Gastrocnemius medialis (tissue), 4 donors: ENCODE measurements at regions of chr13 and their contacts with region 1.

Region 1: GRCh38 chr13:41578371-41578770 is 121.0 kb downstream of the RGCC start:
- DNase-seq: no peak
- ATAC-seq: no peak
- H3K4me3 ChIP-seq: no peak overlapping the region
- H3K27ac ChIP-seq: peak overlapping the region; percentile 59 to 62 (median 60)
- H3K4me1 ChIP-seq: peaks cover 0 to 6% of the 10 kb centered on the region in 2 donors
- H3K27me3 ChIP-seq: no peaks in the 10 kb centered on the region
- CTCF ChIP-seq: no peak
- POLR2A ChIP-seq: no peak

Region 2: GRCh38 chr13:41520016-41520659 is 58.2 kb before region 1 on chr13:
- in situ Hi-C with region 1: no loop called
- intact Hi-C with region 1: no loop called
- DNase-seq: no peak
- ATAC-seq: no peak
- H3K4me3 ChIP-seq: no peak overlapping the region
- H3K27ac ChIP-seq: no peak overlapping the region
- H3K4me1 ChIP-seq: no peaks in the 10 kb centered on the region
- H3K27me3 ChIP-seq: no peaks in the 10 kb centered on the region
- CTCF ChIP-seq: no peak
- POLR2A ChIP-seq: no peak

Region 3: GRCh38 chr13:41533266-41534052 is 44.9 kb before region 1 on chr13:
- in situ Hi-C with region 1: no loop called
- intact Hi-C with region 1: loop called (anchors 1 kb)
- DNase-seq: peak in 1 of 2 donors; percentile 64
- ATAC-seq: peak; percentile 33 to 73
- H3K4me3 ChIP-seq: no peak overlapping the region
- H3K27ac ChIP-seq: no peak overlapping the region
- H3K4me1 ChIP-seq: no peaks in the 10 kb centered on the region
- H3K27me3 ChIP-seq: no peaks in the 10 kb centered on the region
- CTCF ChIP-seq: no peak
- POLR2A ChIP-seq: no peak

Region 4: DNA sequence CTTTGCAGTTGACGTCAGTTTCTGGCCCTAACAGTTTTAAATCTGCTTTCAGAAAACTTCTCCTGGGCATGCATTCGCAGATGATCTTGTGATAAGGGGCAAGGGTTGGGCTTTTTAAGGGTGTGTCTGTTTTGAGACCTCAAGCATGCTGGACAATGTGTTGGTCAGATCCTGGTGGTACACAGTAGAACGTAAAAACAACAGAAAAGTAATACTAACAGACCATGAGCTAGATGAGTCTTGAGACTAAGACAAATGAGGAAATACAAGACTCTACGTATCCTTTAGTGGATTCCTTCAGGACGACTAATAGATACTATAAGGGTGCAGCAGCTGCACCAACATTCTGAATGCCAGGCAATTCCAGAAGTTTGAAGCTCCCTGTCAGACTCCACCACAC is 1682.6 kb after region 1 on chr13:
- in situ Hi-C with region 1: no loop called
- intact Hi-C with region 1: no loop called
- DNase-seq: no peak
- ATAC-seq: no peak
- H3K4me3 ChIP-seq: no peak overlapping the region
- H3K27ac ChIP-seq: no peak overlapping the region
- H3K4me1 ChIP-seq: no peaks in the 10 kb centered on the region
- H3K27me3 ChIP-seq: no peaks in the 10 kb centered on the region
- CTCF ChIP-seq: no peak
- POLR2A ChIP-seq: no peak